ENCODE measurements at regions of chr11 and their contacts with region 1.

Region 1: GRCh38 chr11:88543902-88544655 is 206.5 kb upstream of the CTSC start:
- DNase-seq: peak; percentile 87
- H3K4me3 ChIP-seq: no peak overlapping the region
- H3K27ac ChIP-seq: peak overlapping the region; percentile 39
- H3K4me1 ChIP-seq: peaks cover 17% of the 10 kb centered on the region
- H3K27me3 ChIP-seq: no peaks in the 10 kb centered on the region
- CTCF ChIP-seq: peak; percentile 98 to 100

Region 2: DNA sequence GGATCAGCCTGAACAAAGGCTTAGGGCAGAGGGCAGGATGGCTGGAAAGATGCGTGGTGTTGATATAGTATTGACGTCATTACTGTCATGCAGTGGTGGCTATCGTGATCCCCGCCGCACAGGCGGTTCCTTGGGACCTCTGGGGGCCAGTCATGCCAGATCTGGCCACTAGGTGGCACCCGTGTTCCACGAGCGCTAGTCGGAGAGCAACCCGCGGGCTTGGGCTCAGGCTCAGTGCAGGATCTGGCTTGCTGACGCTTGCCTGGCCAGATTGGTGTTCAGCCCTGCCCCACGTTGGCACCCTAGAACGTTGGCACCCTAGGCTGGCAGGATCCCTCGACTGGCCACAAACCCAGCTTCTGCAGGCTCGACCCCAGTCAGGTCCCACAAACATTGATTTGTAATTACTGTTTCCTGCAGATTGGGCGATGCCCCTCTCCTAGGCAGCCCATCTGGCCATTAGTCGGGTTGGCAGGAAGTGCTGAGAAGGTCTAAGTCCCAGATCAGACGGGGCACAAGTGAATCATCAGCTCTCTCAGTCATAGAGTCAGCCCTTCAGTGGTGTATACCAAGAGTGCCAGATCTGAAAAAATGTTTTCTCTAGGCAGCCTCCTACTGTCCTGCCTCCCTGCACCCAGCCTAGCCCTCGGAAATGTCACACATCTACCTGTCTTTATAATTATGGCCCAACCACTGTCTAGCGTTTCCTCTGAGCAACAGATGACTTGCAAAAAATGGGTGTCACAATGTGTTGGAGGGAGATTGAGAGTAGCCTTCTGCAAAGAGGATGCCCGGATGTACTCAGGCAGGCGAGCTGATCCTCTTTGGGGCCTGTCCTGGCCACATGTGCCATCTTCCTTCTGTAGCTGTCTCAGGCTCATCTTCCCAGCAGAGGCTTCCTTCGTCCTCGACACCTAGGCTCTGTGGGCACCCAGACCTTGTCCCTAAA is 1191.0 kb before region 1 on chr11:
- CTCF ChIA-PET with region 1: no interaction called
- dilution Hi-C with region 1: no loop called
- in situ Hi-C with region 1: no loop called
- intact Hi-C with region 1: loop called (anchors 1 kb)
- DNase-seq: peak; percentile 78
- H3K4me3 ChIP-seq: peak overlapping the region in 2 of 3 experiments; percentile 13 to 30
- H3K27ac ChIP-seq: no peak overlapping the region
- H3K4me1 ChIP-seq: peaks cover 8% of the 10 kb centered on the region
- H3K27me3 ChIP-seq: no peaks in the 10 kb centered on the region
- CTCF ChIP-seq: peak; percentile 89 to 99

Region 3: DNA sequence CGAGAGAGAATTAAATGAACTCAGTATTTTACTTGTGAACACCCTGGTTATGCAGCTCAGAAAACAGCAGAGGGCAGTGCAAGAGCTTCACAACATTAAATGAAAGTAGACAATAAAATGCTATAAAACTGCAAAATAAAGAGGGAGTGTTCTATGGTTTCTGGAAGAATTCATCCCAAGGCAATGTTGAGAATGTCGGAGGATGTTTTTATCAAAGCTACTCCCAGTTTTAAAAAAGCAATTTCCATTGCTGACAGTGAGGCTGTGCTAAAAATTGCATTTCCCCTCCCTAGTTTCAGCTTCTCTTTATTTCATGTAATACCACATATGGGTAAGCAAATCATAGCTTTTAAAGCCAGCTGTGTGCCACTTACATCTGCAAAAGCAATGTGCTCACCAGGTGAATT is 665.7 kb before region 1 on chr11:
- CTCF ChIA-PET with region 1: no interaction called
- dilution Hi-C with region 1: no loop called
- in situ Hi-C with region 1: no loop called
- intact Hi-C with region 1: loop called (anchors 1 kb)
- DNase-seq: peak; percentile 13
- H3K4me3 ChIP-seq: no peak overlapping the region
- H3K27ac ChIP-seq: no peak overlapping the region
- H3K4me1 ChIP-seq: no peaks in the 10 kb centered on the region
- H3K27me3 ChIP-seq: no peaks in the 10 kb centered on the region
- CTCF ChIP-seq: peak; percentile 59 to 60

Region 4: DNA sequence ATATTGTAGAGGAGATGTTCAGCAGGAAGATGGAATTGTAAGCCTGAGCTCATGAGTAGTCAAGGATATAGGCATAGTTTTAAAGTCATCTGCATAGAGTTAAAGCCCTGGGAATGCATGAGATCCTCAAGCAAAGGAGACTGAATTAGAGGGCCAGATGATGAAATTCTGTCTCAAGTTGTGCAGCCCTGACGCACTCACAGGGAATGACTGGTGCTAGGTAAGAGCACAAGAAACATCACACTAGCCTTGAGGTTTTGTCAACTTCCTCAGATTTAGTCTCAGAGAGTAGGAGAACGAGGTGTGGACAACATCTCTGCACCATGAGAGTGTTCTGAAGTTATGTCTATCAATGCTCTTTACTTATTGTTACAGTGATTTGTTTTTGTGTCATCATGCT is 374.6 kb before region 1 on chr11:
- CTCF ChIA-PET with region 1: no interaction called
- dilution Hi-C with region 1: no loop called
- in situ Hi-C with region 1: no loop called
- intact Hi-C with region 1: loop called (anchors 2 kb)
- DNase-seq: peak; percentile 68
- H3K4me3 ChIP-seq: peak overlapping the region in 1 of 3 experiments; percentile 1
- H3K27ac ChIP-seq: peak overlapping the region; percentile 36
- H3K4me1 ChIP-seq: peaks cover 44% of the 10 kb centered on the region
- H3K27me3 ChIP-seq: no peaks in the 10 kb centered on the region
- CTCF ChIP-seq: no peak

Region 5: GRCh38 chr11:88292171-88292843 is 251.8 kb before region 1 on chr11:
- CTCF ChIA-PET with region 1: no interaction called
- dilution Hi-C with region 1: no loop called
- in situ Hi-C with region 1: no loop called
- intact Hi-C with region 1: loop called (anchors 1 kb)
- DNase-seq: peak; percentile 35
- H3K4me3 ChIP-seq: no peak overlapping the region
- H3K27ac ChIP-seq: no peak overlapping the region
- H3K4me1 ChIP-seq: peaks cover 6% of the 10 kb centered on the region
- H3K27me3 ChIP-seq: no peaks in the 10 kb centered on the region
- CTCF ChIP-seq: peak; percentile 7 to 37

Region 6: GRCh38 chr11:88337181-88337986 is 206.7 kb before region 1 on chr11 and contains the start of gene CTSC:
- CTCF ChIA-PET with region 1: interaction called, 6 read pairs
- dilution Hi-C with region 1: no loop called
- in situ Hi-C with region 1: loop called in 1 of 2 experiments (anchors 10 kb)
- intact Hi-C with region 1: loop called (anchors 1 kb)
- DNase-seq: peak; percentile 92
- H3K4me3 ChIP-seq: peak within 1 kb of the TSS; percentile 95 to 96 (median 96)
- H3K27ac ChIP-seq: peak within 1 kb of the TSS; percentile 85
- H3K4me1 ChIP-seq: peaks cover 24% of the 10 kb centered on the region
- H3K27me3 ChIP-seq: no peaks in the 10 kb centered on the region
- CTCF ChIP-seq: peak in 1 of 2 donors; percentile 19
- total RNA-seq, gene CTSC: 192 to 609 TPM

Region 7: DNA sequence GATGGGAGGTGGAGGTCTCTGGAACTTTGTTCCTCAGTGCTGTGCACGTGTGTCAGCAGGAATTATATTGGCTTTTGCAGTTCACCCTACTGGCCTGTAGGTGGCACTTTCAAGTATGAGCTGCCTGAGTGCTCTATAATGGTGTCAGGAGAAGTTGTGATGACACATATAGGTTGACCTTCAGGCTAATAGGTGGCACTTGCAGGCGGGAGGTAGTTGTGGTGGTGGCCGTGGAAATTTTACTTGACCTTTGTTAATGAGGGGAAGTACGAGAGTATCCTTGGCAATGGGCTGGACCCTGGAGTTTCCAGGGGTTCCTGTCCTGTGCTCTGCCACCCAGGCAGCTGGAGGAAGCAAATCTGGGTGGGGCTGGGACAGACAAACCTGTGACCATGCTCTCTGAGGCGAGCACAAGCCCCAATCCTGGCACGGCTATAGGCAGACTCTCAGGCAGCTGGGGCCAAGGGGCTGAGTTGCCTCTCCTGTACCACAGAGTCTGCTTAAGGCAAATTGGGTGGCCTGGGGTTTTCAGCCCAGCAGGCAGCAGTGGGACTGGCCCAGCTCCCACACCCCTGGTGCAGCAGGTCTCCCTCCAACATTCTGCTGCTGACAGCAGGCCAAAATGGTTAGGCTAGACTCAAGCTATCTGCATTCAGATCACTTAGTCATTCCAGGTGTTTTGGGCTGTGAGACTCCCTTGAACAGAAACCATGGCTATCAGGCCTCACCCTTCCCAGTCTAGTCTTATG is 59.0 kb before region 1 on chr11:
- CTCF ChIA-PET with region 1: interaction called, 5 read pairs
- dilution Hi-C with region 1: no loop called
- in situ Hi-C with region 1: no loop called
- intact Hi-C with region 1: loop called (anchors 5 kb)
- DNase-seq: peak; percentile 85
- H3K4me3 ChIP-seq: no peak overlapping the region
- H3K27ac ChIP-seq: no peak overlapping the region
- H3K4me1 ChIP-seq: peaks cover 29% of the 10 kb centered on the region
- H3K27me3 ChIP-seq: no peaks in the 10 kb centered on the region
- CTCF ChIP-seq: peak; percentile 68 to 82

Measured in mammary epithelial cell (primary cell).